AG04449 (cell line): ENCODE measurements at regions of chr9 and their contacts with region 1.

Region 1: GRCh38 chr9:98315551-98316060 is 60.2 kb upstream of the TBC1D2 start:
- DNase-seq: no peak
- H3K4me3 ChIP-seq: no peak overlapping the region
- CTCF ChIP-seq: peak; percentile 94

Region 2: GRCh38 chr9:98215821-98216220 is 99.8 kb before region 1 on chr9:
- CTCF ChIA-PET with region 1: no interaction called
- POLR2A ChIA-PET with region 1: no interaction called
- DNase-seq: no peak
- H3K4me3 ChIP-seq: no peak overlapping the region
- CTCF ChIP-seq: peak; percentile 46

Region 3: GRCh38 chr9:98333703-98334582 is 18.3 kb after region 1 on chr9:
- CTCF ChIA-PET with region 1: interaction called, 56 read pairs
- POLR2A ChIA-PET with region 1: no interaction called
- DNase-seq: no peak
- H3K4me3 ChIP-seq: no peak overlapping the region
- CTCF ChIP-seq: no peak

Region 4: DNA sequence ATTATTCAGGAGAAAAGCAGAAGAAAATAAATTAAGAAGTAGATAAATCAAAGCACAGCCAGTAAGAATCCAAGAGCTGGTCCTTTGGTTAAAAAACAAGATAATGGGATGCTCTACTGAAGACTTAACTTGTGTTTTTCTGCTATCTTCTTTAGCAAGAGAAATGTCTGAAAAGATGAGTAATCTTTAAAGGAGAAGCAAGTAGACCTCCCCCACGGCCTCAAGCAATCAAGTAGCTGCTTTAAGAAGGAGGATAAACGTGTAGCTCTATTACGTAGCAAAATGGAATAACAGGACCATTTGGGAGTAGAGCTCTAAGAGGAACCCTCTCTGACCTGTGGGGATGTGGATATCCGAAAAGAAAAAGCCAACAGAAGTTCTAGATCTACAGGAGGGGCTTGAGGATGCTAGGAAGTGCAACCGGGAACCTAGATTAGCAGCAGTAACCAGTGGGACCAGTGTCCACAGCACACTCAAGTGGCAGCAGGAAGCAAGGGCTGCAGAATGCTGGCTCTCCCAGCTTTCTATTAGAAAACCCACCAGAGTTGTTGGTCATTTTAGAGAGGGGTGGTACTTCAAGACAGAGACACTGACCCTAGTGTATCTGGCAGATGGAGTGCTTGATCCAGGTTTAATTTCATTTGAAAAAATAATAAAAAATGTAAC is 207.8 kb after region 1 on chr9:
- CTCF ChIA-PET with region 1: interaction called, 16 read pairs
- POLR2A ChIA-PET with region 1: no interaction called
- DNase-seq: no peak
- H3K4me3 ChIP-seq: no peak overlapping the region
- CTCF ChIP-seq: peak; percentile 57

Region 5: GRCh38 chr9:98766586-98766985 is 451.0 kb after region 1 on chr9:
- CTCF ChIA-PET with region 1: interaction called, 22 read pairs
- POLR2A ChIA-PET with region 1: no interaction called
- DNase-seq: no peak
- H3K4me3 ChIP-seq: no peak overlapping the region
- CTCF ChIP-seq: no peak

Region 6: DNA sequence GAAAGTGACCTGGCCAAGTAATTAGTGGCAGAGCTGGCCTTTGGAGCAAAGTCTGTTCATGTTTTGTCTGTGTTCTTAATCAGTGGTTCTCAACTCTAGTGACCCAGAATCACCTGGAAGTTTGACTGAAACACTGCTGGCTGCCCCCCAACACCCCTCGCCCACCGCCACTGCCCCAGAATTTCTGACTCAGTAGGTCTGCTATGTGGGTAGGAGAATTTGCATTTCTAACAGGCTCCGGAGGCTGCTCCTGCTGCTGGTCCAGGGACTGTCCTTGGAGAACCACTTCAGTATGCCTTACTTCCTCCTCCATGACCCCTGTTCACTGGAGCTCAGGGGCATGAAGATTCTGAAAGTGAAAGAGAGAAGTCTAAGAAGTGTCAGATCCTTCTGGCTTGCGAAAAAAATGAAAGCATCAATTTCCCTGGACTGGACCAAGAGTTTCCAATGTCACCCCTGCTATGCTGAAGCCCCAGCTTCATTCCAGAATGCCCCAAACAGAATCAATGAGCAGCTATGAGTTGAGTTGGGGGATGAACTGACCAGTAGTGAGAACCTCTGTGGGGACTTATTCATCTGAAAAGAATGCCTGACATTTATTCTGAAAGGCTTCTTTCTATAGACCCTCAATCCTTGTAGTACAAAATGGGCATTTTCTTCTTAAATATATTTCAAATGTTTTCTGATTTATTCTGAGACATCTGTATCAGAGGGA is 607.3 kb after region 1 on chr9:
- CTCF ChIA-PET with region 1: no interaction called
- POLR2A ChIA-PET with region 1: no interaction called
- DNase-seq: no peak
- H3K4me3 ChIP-seq: no peak overlapping the region; the same call in 1 of the 2 replicates
- CTCF ChIP-seq: no peak